ENCODE measurements at regions of chr15 and their contacts with region 1.

Region 1: GRCh38 chr15:77118882-77119321 is 48.0 kb upstream of the TSPAN3 start:
- DNase-seq: peak; percentile 68
- ATAC-seq: peak; percentile 76
- H3K4me3 ChIP-seq: no peak overlapping the region
- H3K27ac ChIP-seq: no peak overlapping the region
- H3K4me1 ChIP-seq: no peaks in the 10 kb centered on the region
- H3K27me3 ChIP-seq: no peaks in the 10 kb centered on the region
- CTCF ChIP-seq: peak; percentile 88

Region 2: DNA sequence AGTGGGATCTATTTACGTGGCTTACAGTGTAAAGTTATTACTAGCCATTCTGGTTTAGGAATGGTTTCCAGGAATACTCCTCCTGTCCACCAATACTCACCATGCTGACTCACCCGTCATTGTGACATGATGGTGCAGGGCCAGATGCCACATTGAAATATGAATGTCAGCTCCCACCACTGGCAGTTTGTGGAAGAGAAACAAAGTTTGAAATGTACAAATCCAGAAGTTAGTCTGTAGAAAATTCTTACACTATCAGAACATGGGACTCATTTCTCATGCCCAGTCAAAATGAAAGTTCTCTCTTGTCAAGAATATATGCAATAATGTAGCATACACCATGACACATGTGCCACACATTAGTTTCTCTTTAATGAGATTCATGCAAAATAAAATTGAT is 33.6 kb before region 1 on chr15:
- CTCF ChIA-PET with region 1: no interaction called
- POLR2A ChIA-PET with region 1: no interaction called
- intact Hi-C with region 1: no loop called
- DNase-seq: peak; percentile 77
- ATAC-seq: peak; percentile 68
- H3K4me3 ChIP-seq: no peak overlapping the region
- H3K27ac ChIP-seq: no peak overlapping the region
- H3K4me1 ChIP-seq: peaks cover 6% of the 10 kb centered on the region
- H3K27me3 ChIP-seq: no peaks in the 10 kb centered on the region
- CTCF ChIP-seq: no peak

Region 3: DNA sequence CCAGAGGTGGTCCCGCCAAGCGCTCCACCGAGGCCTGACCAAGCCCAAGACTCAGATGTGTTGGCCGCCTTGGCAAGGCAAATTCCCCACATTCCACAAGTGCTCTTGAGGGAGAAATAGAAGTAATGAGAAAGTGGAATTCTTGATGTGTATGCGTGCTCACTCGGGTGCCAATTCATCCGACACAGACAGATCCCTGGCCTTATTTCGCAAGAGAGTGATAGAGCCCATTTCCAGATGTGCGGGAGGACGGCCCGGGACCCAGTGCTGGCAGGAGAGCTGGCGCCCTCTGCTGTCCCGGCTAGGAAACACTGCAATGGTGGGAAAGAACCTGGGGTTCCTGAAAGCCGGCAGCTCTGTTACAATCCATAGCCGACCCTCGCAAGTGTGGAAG is 377.8 kb after region 1 on chr15:
- CTCF ChIA-PET with region 1: no interaction called
- POLR2A ChIA-PET with region 1: no interaction called
- intact Hi-C with region 1: loop called (anchors 1 kb)
- DNase-seq: peak; percentile 76
- ATAC-seq: peak; percentile 85
- H3K4me3 ChIP-seq: peak overlapping the region; percentile 32; the same call in 1 of the 2 replicates
- H3K27ac ChIP-seq: no peak overlapping the region
- H3K4me1 ChIP-seq: no peaks in the 10 kb centered on the region; the same call in 1 of the 2 replicates
- H3K27me3 ChIP-seq: no peaks in the 10 kb centered on the region
- CTCF ChIP-seq: peak; percentile 91

Region 4: GRCh38 chr15:77543159-77543882 is 424.4 kb after region 1 on chr15:
- CTCF ChIA-PET with region 1: interaction called, 14 read pairs
- POLR2A ChIA-PET with region 1: no interaction called
- intact Hi-C with region 1: loop called (anchors 2 kb)
- DNase-seq: peak; percentile 87
- ATAC-seq: peak; percentile 84
- H3K4me3 ChIP-seq: peak overlapping the region; percentile 66
- H3K27ac ChIP-seq: peak overlapping the region; percentile 55
- H3K4me1 ChIP-seq: peaks cover 30% of the 10 kb centered on the region
- H3K27me3 ChIP-seq: no peaks in the 10 kb centered on the region
- CTCF ChIP-seq: peak; percentile 99

Region 5: DNA sequence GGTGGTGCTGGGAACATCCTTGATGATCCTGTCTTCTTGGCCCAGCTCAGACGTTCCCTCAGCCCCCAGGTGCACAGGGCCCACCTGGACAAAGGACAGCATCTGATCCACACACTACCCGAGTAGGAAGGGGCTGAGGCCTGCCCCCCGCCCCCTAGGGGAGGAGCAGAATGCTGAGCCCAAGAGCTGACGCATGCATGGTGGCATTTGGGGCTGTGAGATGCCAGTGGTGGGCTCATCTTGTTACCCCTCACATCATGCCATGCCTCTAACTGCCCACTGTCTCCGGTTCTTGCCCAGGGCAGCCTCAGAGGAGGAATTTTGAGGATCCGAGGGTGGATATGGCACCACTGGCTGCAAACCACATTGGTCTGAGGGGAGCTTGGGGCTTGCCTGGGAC is 452.3 kb after region 1 on chr15:
- CTCF ChIA-PET with region 1: no interaction called
- POLR2A ChIA-PET with region 1: interaction called, 15 read pairs
- intact Hi-C with region 1: no loop called
- DNase-seq: no peak
- ATAC-seq: no peak
- H3K4me3 ChIP-seq: no peak overlapping the region
- H3K27ac ChIP-seq: no peak overlapping the region
- H3K4me1 ChIP-seq: no peaks in the 10 kb centered on the region
- H3K27me3 ChIP-seq: no peaks in the 10 kb centered on the region
- CTCF ChIP-seq: no peak

Region 6: GRCh38 chr15:77633134-77633912 is 514.4 kb after region 1 on chr15:
- CTCF ChIA-PET with region 1: interaction called, 3 read pairs
- POLR2A ChIA-PET with region 1: no interaction called
- intact Hi-C with region 1: loop called (anchors 5 kb)
- DNase-seq: peak; percentile 85
- ATAC-seq: peak; percentile 89
- H3K4me3 ChIP-seq: peak overlapping the region; percentile 68
- H3K27ac ChIP-seq: no peak overlapping the region
- H3K4me1 ChIP-seq: 0 out of 2 replicates have a peak, but pooled peaks cover 4% of the 10 kb centered on the region
- H3K27me3 ChIP-seq: peaks cover 28% of the 10 kb centered on the region
- CTCF ChIP-seq: peak; percentile 98